ENCODE measurements at regions of chr9 and their contacts with region 1.

Region 1: GRCh38 chr9:120438836-120439546 is 141.0 kb downstream of the CDK5RAP2 start:
- DNase-seq: peak in 1 of 2 experiments; percentile 59
- H3K4me3 ChIP-seq: no peak overlapping the region
- H3K27ac ChIP-seq: no peak overlapping the region
- H3K4me1 ChIP-seq: no peaks in the 10 kb centered on the region
- H3K27me3 ChIP-seq: no peaks in the 10 kb centered on the region
- CTCF ChIP-seq: peak; percentile 58 to 81 (median 71)
- EP300 ChIP-seq: no peak
- POLR2A ChIP-seq: no peak
- RAD21 ChIP-seq: peak; percentile 77 to 82

Region 2: GRCh38 chr9:120360046-120360445 is 78.9 kb before region 1 on chr9:
- CTCF ChIA-PET with region 1: no interaction called
- POLR2A ChIA-PET with region 1: no interaction called
- DNase-seq: no peak
- H3K4me3 ChIP-seq: no peak overlapping the region
- H3K27ac ChIP-seq: no peak overlapping the region
- H3K4me1 ChIP-seq: no peaks in the 10 kb centered on the region
- H3K27me3 ChIP-seq: no peaks in the 10 kb centered on the region
- CTCF ChIP-seq: no peak
- EP300 ChIP-seq: no peak
- POLR2A ChIP-seq: no peak
- RAD21 ChIP-seq: no peak

Region 3: GRCh38 chr9:120396931-120397330 is 42.1 kb before region 1 on chr9:
- CTCF ChIA-PET with region 1: interaction called, 14 read pairs
- POLR2A ChIA-PET with region 1: no interaction called
- DNase-seq: no peak
- H3K4me3 ChIP-seq: no peak overlapping the region
- H3K27ac ChIP-seq: no peak overlapping the region
- H3K4me1 ChIP-seq: no peaks in the 10 kb centered on the region
- H3K27me3 ChIP-seq: no peaks in the 10 kb centered on the region
- CTCF ChIP-seq: no peak
- EP300 ChIP-seq: no peak
- POLR2A ChIP-seq: no peak
- RAD21 ChIP-seq: no peak

Region 4: GRCh38 chr9:120424248-120424647 is 14.7 kb before region 1 on chr9:
- CTCF ChIA-PET with region 1: interaction called, 70 read pairs
- POLR2A ChIA-PET with region 1: no interaction called
- DNase-seq: no peak
- H3K4me3 ChIP-seq: no peak overlapping the region
- H3K27ac ChIP-seq: no peak overlapping the region
- H3K4me1 ChIP-seq: peaks cover 0 to 7% (median 0%) of the 10 kb centered on the region in 4 experiments; a peak in 2 of 7 replicates
- H3K27me3 ChIP-seq: no peaks in the 10 kb centered on the region
- CTCF ChIP-seq: no peak
- EP300 ChIP-seq: no peak
- POLR2A ChIP-seq: no peak
- RAD21 ChIP-seq: no peak

Region 5: GRCh38 chr9:120477521-120478001 is 38.6 kb after region 1 on chr9:
- CTCF ChIA-PET with region 1: interaction called, 30 read pairs
- POLR2A ChIA-PET with region 1: no interaction called
- DNase-seq: peak; percentile 29 to 85
- H3K4me3 ChIP-seq: no peak overlapping the region
- H3K27ac ChIP-seq: no peak overlapping the region
- H3K4me1 ChIP-seq: peaks cover 0 to 4% (median 0%) of the 10 kb centered on the region in 4 experiments; a peak in 2 of 7 replicates
- H3K27me3 ChIP-seq: no peaks in the 10 kb centered on the region
- CTCF ChIP-seq: peak; percentile 80 to 94 (median 88)
- EP300 ChIP-seq: no peak
- POLR2A ChIP-seq: no peak
- RAD21 ChIP-seq: peak; percentile 88 to 89

Measured in H1 (cell line).